ENCODE measurements at regions of chr17 and their contacts with region 1.

Region 1: GRCh38 chr17:43211480-43212402 is at the start of gene TMEM106A:
- DNase-seq: peak; percentile 86 to 93 (median 93)
- ATAC-seq: peak; percentile 93 to 94
- H3K4me3 ChIP-seq: peak within 1 kb of the TSS; percentile 74
- H3K27ac ChIP-seq: peak within 1 kb of the TSS; percentile 54
- H3K4me1 ChIP-seq: no peaks in the 10 kb centered on the region
- H3K27me3 ChIP-seq: no peaks in the 10 kb centered on the region
- total RNA-seq, gene TMEM106A: 4.9 to 8.7 (median 6.7) TPM

Region 2: GRCh38 chr17:43118679-43119615 is 92.8 kb before region 1 on chr17:
- intact Hi-C with region 1: no loop called
- DNase-seq: no peak
- ATAC-seq: no peak
- H3K4me3 ChIP-seq: no peak overlapping the region
- H3K27ac ChIP-seq: no peak overlapping the region
- H3K4me1 ChIP-seq: no peaks in the 10 kb centered on the region
- H3K27me3 ChIP-seq: no peaks in the 10 kb centered on the region

Region 3: DNA sequence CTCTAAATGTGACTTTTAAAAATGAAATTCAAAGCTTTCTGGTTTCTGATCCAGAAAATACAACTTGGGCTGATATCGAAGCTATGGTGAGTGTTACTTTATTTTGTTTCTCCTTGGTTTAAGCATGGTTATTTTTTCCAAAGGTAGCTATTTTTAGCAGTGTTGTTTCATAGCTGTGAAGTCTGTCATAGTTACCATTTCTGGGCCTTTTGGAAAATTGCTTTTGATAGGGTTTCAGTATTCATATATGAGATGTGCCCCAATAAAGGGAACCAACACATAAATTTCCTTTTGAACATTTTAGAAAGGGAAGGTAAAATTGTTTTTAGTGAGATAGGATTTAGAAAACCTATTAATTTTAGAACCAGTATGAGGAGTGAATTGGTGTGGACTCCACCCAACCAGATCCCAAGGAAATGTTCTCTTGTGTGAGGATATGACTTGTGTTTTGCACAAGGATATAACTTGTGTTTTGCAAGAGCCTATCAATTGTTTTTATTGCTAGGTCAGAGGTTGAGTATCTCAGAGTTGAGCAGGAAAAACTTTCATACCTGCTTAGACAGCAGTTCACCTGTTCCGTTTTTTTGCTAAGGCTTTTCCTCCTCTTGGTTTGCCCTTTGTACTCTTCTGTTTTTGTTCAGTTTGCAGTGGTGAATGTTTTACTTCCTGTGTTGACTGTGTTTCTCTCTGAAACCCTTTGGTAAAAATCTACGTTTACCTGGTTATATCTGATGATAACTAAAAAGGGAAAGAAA is 35.7 kb before region 1 on chr17:
- intact Hi-C with region 1: loop called in 1 of 4 experiments (anchors 2 kb)
- DNase-seq: no peak
- ATAC-seq: no peak
- H3K4me3 ChIP-seq: no peak overlapping the region
- H3K27ac ChIP-seq: no peak overlapping the region
- H3K4me1 ChIP-seq: no peaks in the 10 kb centered on the region
- H3K27me3 ChIP-seq: no peaks in the 10 kb centered on the region

Region 4: DNA sequence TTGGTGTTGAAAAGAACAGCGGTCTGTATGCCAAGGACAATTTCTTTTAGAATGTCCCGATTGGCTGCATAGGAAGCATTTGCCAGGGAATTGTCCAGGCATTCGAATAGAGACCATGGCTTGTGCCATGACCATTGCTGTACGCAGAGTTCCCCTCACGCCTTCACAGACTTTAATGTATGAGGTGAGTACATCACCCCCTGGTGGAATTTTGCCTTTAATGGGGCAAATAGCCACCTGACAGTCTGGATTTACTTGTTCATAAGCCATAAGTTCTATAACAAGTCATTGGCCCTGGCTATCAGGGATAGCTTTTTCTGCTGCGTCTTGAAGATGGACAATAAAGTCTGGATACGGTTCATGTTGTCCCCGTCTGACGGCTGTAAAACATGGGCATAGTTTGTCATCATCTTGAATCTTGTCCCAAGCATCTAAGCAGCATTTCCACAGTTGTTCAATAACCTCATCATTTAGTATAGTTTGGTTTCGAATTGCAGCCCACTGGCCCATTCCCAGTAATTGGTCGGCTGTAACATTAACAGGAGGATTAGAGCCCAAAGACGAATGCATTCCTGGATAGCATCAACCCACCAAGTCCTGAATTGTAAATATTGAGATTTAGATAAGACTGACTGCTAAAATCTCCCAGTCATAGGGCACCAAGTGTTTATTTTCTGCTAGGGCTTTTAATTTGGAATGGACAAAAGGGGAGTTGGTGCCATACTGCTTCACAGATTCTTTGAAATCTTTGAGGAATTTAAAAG is 119.3 kb after region 1 on chr17:
- intact Hi-C with region 1: loop called in 1 of 4 experiments (anchors 5 kb)
- DNase-seq: no peak
- ATAC-seq: no peak
- H3K4me3 ChIP-seq: no peak overlapping the region
- H3K27ac ChIP-seq: no peak overlapping the region
- H3K4me1 ChIP-seq: no peaks in the 10 kb centered on the region
- H3K27me3 ChIP-seq: no peaks in the 10 kb centered on the region

Measured in right cardiac atrium (tissue), 5 donors.